Heart left ventricle (tissue), 16 donors: ENCODE measurements at regions of chr9 and their contacts with region 1.

Region 1: GRCh38 chr9:7613931-7614330 is 185.6 kb downstream of the DMAC1 start:
- DNase-seq: no peak
- ATAC-seq: no peak
- H3K4me3 ChIP-seq: no peak overlapping the region
- H3K27ac ChIP-seq: no peak overlapping the region
- H3K4me1 ChIP-seq: no peaks in the 10 kb centered on the region
- H3K27me3 ChIP-seq: no peaks in the 10 kb centered on the region
- CTCF ChIP-seq: no peak
- POLR2A ChIP-seq: no peak

Region 2: DNA sequence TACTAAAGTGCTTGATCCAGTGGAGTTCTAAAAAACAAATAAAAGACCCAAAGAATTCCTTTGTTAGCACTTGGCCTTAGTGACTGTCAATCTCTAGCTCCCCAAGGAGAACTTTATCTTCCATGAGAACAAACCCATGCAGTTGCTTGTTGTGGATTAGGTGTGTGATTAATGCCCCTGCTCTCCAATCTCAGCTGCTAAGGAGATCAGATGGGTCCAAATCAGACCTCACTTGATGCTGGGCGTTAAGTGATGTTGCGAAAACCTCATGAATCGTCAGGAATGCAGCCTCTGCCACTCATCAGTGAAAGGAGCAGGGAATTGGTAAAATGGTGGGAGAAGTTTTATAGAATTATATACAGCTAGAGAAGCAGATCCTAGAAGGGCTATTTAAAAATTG is 51.9 kb after region 1 on chr9:
- intact Hi-C with region 1: loop called in 1 of 10 experiments (anchors 10 kb)
- DNase-seq: no peak
- ATAC-seq: no peak
- H3K4me3 ChIP-seq: no peak overlapping the region
- H3K27ac ChIP-seq: no peak overlapping the region
- H3K4me1 ChIP-seq: no peaks in the 10 kb centered on the region
- H3K27me3 ChIP-seq: no peaks in the 10 kb centered on the region
- CTCF ChIP-seq: no peak
- POLR2A ChIP-seq: no peak